Activated CD8-positive, alpha-beta T cell treated with anti-CD3 and anti-CD28 coated beads, Interleukin-2, amount 10 ng/mL, durations not matched to agents 7 days and 5 days (primary cell): ENCODE measurements at regions of chr5 and their contacts with region 1.

Region 1: DNA sequence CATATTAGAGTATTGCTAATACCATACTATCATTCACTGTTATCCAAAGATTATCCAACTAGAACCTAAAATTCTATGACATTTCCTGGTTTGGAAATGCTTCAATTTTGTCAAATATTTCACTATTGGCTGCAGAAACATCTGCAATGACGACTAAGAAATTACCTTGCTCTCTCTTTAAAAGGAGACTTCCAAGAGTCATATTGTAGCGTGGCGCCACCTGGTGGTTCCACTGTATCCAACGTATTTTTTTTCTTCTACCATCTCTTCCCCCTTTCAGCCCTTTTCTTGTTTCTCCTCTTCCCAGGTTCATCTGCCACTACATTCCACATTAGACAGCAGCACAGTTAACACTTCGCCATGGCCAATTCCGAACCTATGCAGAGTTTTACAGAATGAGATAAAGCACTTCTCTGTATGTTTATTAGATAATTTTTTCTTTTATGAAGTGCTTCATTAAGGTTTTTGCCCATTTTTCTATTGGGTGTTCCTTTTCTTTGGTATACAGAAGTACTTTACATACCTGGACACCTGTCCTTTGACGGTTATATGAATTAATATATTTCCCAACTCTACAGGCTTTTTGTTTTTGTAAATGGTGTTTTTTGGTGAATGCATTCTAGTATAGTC is 153.5 kb downstream of the CDC42SE2 start:
- DNase-seq: peak; percentile 91
- ATAC-seq: peak; percentile 37
- H3K4me3 Mint-ChIP-seq: peak overlapping the region; percentile 62
- H3K27ac Mint-ChIP-seq: peak overlapping the region; percentile 57
- H3K4me1 Mint-ChIP-seq: peaks cover 41% of the 10 kb centered on the region
- H3K27me3 Mint-ChIP-seq: no peaks in the 10 kb centered on the region

Region 2: GRCh38 chr5:131394128-131394527 is 23.2 kb before region 1 on chr5:
- CTCF ChIA-PET with region 1: interaction called, 23 read pairs
- POLR2A ChIA-PET with region 1: interaction called, 8 read pairs
- DNase-seq: peak; percentile 61
- ATAC-seq: peak; percentile 86
- H3K4me3 Mint-ChIP-seq: peak overlapping the region; percentile 61
- H3K27ac Mint-ChIP-seq: peak overlapping the region; percentile 87
- H3K4me1 Mint-ChIP-seq: peaks cover 67% of the 10 kb centered on the region
- H3K27me3 Mint-ChIP-seq: no peaks in the 10 kb centered on the region